Right ventricle myocardium inferior (tissue), 1 donor: ENCODE measurements at regions of chr21 and their contacts with region 1.

Region 1: DNA sequence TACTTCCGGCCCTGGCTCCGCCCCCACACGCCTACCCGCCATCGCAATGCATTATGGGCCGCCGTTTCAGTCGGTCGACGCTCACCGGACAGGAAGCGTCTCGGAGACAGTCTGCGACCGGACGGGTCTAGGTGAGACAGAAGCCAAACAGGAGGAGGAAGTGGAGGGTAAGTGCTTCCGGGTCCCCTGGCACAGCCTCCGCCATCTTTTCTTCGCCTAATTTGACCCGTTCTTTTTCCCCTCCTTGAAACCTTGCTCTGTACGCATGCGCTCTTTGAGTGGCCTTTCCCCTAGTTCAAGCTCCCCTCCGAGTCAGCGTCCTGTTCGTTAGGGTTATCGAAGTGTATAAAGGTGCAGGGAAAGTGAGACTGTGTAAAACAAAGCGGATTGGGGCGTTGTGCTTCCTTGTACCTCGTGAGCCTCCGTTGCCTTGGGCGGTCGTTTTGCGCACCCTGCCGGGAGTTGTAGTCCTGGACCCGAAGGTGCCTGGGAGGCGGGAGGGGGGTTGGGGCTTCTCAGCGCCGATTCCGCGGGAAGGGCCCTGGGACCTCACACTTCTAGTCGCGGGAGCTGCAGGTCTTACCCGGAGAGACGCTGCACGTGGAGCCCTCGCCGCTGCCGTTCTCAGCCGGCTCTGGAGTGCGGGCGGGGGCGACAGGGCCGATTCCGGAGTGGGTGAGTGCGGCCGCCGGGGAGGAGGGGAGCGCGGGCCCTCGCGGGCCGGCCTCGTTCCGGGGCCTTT is at the starts of genes ATP5PF and GABPA:
- DNase-seq: peak; percentile 98
- ATAC-seq: peak; percentile 97
- total RNA-seq, gene ATP5PF: 969 TPM
- total RNA-seq, gene GABPA: 18.3 TPM

Region 2: GRCh38 chr21:25664491-25664931 is 70.6 kb before region 1 on chr21:
- intact Hi-C with region 1: no loop called
- DNase-seq: no peak
- ATAC-seq: peak; percentile 88

Region 3: DNA sequence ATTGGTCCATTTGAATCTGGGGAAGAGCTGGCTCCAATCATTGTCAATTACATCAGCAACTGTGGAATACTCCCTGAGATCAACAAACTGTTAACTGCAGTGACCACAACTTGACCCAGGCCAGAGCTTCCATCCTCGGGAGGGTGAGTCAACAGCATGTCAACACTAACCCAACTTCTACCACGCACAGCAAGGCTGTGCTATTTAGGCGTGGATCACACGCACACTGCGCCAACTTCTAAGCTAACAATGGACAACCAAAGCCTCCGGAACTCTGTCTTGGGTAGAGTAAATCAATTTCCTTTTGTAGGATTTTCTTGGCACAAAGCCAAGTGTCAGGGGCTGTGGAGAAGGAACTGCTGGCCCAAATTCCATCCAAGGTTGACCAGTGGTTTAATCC is 405.1 kb after region 1 on chr21:
- intact Hi-C with region 1: loop called (anchors 10 kb)
- DNase-seq: no peak
- ATAC-seq: peak; percentile 95